ENCODE measurements at regions of chr19 and their contacts with region 1.

Region 1: GRCh38 chr19:36528194-36528920 is at the start of gene ZNF260:
- DNase-seq: peak; percentile 87
- H3K4me3 Mint-ChIP-seq: peak within 1 kb of the TSS; percentile 96
- H3K27ac Mint-ChIP-seq: peak within 1 kb of the TSS; percentile 94
- H3K4me1 Mint-ChIP-seq: peaks cover 17% of the 10 kb centered on the region
- H3K27me3 Mint-ChIP-seq: no peaks in the 10 kb centered on the region
- total RNA-seq, gene ZNF260: 6.2 and 7.1 TPM in 2 replicates

Region 2: DNA sequence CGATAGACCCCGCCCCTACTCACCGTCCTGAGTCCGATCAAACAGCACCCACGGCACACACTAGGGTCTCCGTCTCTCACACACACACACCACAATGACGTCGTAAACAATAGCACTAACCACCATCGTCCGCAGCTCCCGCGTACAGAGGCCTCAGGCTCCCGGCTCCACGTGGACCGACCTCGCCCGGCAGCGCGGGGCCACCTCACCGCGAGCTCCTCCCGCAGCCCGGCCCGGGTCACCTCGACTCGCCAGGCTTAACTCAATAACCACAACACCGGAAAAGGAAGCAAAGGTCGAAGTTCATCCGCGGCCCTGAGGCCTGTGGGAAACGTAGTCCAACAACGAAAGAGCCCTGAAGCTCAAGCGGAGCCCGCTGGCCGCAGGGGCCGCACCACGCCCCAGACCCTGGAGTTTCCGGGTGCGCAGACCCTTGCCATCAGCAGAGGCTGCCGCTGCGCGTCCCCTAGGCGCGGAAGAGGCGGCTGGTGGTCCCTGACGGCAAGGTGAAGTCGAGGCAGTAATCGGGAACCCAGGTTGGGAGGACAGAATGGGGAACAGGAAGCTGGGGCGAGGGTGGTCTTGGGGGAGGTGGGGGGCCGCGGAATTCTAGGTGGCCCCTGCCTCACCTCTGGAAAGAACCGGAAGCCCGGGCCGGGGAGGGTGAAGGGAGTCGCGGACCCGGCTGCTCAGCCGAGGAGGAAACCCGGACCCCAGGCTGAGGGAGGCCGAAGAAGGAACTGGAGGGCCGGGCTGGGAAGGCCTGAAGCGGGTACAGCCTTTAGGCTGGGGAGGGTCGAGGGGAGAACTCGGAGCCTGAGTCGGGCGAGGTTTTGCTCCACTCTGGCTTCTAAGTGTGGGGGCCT is 44.9 kb after region 1 on chr19 and contains the start of gene ZNF529:
- intact Hi-C with region 1: loop called (anchors 1 kb)
- DNase-seq: peak; percentile 85
- H3K4me3 Mint-ChIP-seq: peak within 1 kb of the TSS; percentile 93
- H3K27ac Mint-ChIP-seq: peak within 1 kb of the TSS; percentile 95
- H3K4me1 Mint-ChIP-seq: peaks cover 24% of the 10 kb centered on the region
- H3K27me3 Mint-ChIP-seq: no peaks in the 10 kb centered on the region
- total RNA-seq, gene ZNF529: 14.8 and 15.2 TPM in 2 replicates

Region 3: DNA sequence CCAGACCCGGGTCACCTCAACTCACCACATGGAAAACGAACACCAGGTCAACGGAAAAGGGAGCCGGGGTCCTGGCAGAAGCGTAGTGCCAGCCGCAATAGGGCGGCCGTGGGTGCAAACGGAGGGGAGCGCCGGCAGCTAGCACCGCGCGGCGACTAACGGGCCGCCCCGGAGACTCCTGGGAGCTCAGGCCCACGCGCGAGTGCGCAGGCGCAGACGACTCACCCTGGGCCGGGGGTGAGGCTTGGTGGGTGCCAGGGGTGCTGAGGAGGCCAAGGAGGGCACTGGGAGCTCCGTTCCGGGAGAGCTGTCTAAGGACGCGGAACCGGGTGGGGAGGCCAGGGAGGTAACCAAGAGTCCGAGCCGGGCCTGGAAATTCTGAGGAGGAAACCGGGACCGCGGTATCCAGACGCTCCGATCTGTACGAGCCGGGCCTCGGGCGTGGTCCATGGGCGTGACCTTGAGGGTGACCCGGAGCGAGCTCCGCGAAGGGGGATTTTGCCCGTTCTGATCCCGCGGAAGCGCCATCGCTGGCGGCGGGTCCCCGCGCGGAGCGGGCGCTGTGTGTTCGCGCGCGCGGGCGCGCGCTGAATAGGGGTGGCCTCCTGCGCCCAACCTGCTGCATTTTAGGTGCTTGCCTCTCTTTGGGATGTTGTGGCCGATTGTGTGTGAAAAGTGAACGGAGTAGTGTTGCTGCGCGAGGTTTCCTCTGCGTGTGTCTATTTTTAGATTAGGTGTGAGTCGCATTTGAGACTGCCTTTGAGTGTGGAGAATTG is 76.9 kb after region 1 on chr19 and contains the start of gene ZNF382:
- intact Hi-C with region 1: loop called (anchors 2 kb)
- DNase-seq: peak; percentile 81
- H3K4me3 Mint-ChIP-seq: peak within 1 kb of the TSS; percentile 87
- H3K27ac Mint-ChIP-seq: peak within 1 kb of the TSS; percentile 89
- H3K4me1 Mint-ChIP-seq: peaks cover 17% of the 10 kb centered on the region
- H3K27me3 Mint-ChIP-seq: no peaks in the 10 kb centered on the region
- total RNA-seq, gene ZNF382: 8.8 and 10.8 TPM in 2 replicates

Region 4: DNA sequence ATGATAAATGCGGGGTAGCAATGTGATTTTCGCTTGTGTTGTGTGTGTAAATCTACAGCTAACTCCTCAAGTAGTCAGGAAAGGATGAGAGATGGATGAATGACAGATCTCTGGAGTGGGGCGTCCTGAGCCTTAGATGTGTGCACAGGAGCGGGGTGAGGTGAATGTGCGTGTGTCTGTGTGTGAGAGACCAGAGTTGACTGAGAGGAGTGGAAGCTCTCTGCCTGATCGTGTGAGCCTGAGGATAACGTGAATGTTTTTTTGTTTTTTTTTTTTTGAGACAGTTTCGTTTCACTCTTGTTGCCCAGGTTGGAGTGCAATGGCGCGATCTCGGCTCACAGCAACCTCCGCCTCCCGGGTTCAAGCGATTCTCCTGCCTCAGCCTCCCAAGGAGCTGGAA is 137.5 kb after region 1 on chr19:
- intact Hi-C with region 1: loop called (anchors 2 kb)
- DNase-seq: no peak
- H3K4me3 Mint-ChIP-seq: peak overlapping the region; percentile 98
- H3K27ac Mint-ChIP-seq: peak overlapping the region; percentile 38
- H3K4me1 Mint-ChIP-seq: peaks cover 14% of the 10 kb centered on the region
- H3K27me3 Mint-ChIP-seq: no peaks in the 10 kb centered on the region

Region 5: DNA sequence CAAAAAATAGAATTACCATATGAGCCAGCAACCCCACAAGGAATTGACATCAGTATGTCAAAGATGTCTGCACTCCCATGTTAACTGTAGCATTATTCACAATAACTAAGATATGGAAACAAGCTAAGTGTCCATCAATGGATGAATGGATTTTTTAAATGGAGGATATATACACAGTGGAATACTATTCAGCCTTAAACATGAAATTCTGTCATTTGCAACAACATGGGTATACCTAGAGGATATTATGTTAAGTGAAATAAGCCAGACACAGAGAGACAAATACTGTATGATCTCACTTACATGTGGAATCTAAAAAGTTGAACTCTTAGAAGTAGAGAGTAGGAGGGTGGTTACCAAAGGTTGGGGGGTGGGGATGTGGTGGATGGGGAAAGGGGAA is 151.1 kb after region 1 on chr19:
- intact Hi-C with region 1: no loop called
- DNase-seq: no peak
- H3K4me3 Mint-ChIP-seq: no peak overlapping the region
- H3K27ac Mint-ChIP-seq: no peak overlapping the region
- H3K4me1 Mint-ChIP-seq: no peaks in the 10 kb centered on the region
- H3K27me3 Mint-ChIP-seq: no peaks in the 10 kb centered on the region

Measured in activated T-helper 2 cell treated with anti-CD3 and anti-CD28 coated beads, Interferon-gamma antibody, Interleukin-2, Interleukin-4, amounts not matched to agents 10 μg/mL and 5 μg/mL and 100 μg/mL, durations not matched to agents 14 hours and 24 hours and 36 hours (primary cell).